Common myeloid progenitor, CD34-positive (primary cell): ENCODE measurements at regions of chr9 and their contacts with region 1.

Region 1: DNA sequence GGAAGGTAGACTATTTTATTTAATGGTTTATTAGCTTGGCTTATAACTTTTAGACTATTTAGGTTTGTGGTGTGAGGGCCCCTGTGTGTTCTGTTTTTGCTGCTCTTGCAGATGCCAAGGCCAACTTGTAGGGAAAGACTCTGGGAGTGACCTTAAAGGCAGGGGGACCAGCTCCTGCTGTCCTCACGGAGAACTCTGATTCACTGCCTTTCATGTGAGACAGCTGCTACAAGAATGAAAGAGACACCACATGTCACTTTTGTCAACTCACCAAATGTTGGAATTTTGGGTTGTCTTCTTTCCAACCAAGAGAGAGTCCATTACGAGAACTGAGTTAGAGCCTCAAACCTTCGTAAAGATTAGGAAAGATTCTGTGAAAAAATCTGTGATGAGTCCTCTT is 258.3 kb upstream of the ADAMTSL1 start:
- DNase-seq: no peak
- H3K4me3 ChIP-seq: no peak overlapping the region
- H3K27ac ChIP-seq: no peak overlapping the region
- H3K4me1 ChIP-seq: no peaks in the 10 kb centered on the region
- H3K27me3 ChIP-seq: peaks cover 0 to 9% (median 0%) of the 10 kb centered on the region in 5 experiments

Region 2: GRCh38 chr9:17810728-17811571 is 404.7 kb before region 1 on chr9:
- CTCF ChIA-PET with region 1: interaction called, 10 read pairs
- POLR2A ChIA-PET with region 1: no interaction called
- DNase-seq: peak; percentile 29 to 63 (median 50)
- H3K4me3 ChIP-seq: no peak overlapping the region
- H3K27ac ChIP-seq: no peak overlapping the region
- H3K4me1 ChIP-seq: no peaks in the 10 kb centered on the region
- H3K27me3 ChIP-seq: peaks cover 0 to 17% (median 7%) of the 10 kb centered on the region in 5 experiments

Region 3: GRCh38 chr9:18163146-18163545 is 52.5 kb before region 1 on chr9:
- CTCF ChIA-PET with region 1: no interaction called
- POLR2A ChIA-PET with region 1: no interaction called
- DNase-seq: no peak
- H3K4me3 ChIP-seq: no peak overlapping the region
- H3K27ac ChIP-seq: no peak overlapping the region
- H3K4me1 ChIP-seq: no peaks in the 10 kb centered on the region
- H3K27me3 ChIP-seq: peaks cover 0 to 3% (median 0%) of the 10 kb centered on the region in 5 experiments